Activated CD4-positive, alpha-beta T cell treated with anti-CD3 and anti-CD28 coated beads for 36 hours (primary cell): ENCODE measurements at regions of chr19 and their contacts with region 1.

Region 1: DNA sequence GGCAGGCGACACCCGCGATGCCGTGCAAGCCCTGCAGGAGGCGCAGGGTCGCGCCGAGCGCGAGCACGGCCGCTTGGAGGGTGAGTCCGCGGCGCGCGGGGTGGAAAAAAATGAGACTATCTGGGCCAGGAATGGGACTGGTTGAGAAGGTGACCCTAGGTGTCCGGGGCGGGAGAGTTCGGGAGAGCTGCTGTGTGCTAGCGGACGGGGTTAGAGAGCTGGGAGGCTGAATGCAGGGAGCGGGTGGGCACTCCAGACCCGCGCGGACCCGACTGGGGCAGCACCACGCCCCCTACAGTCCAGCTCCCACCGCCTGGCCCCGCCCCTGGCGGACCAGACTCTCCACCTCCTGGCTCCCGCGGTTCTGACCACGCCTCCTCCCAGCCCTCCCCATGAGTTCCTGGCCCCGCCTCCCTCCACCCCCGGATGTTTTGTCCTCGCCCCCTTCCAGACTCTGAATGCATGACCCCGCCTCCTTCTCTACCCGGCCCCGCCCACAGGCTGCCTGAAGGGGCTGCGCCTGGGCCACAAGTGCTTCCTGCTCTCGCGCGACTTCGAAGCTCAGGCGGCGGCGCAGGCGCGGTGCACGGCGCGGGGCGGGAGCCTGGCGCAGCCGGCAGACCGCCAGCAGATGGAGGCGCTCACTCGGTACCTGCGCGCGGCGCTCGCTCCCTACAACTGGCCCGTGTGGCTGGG is 1.5 kb downstream of the CLEC11A start:
- DNase-seq: peak; percentile 99
- ATAC-seq: peak; percentile 87
- H3K4me3 Mint-ChIP-seq: peak overlapping the region; percentile 80
- H3K27ac Mint-ChIP-seq: peak overlapping the region; percentile 63
- H3K4me1 Mint-ChIP-seq: peaks cover 26% of the 10 kb centered on the region
- H3K27me3 Mint-ChIP-seq: peaks cover 36% of the 10 kb centered on the region

Region 2: DNA sequence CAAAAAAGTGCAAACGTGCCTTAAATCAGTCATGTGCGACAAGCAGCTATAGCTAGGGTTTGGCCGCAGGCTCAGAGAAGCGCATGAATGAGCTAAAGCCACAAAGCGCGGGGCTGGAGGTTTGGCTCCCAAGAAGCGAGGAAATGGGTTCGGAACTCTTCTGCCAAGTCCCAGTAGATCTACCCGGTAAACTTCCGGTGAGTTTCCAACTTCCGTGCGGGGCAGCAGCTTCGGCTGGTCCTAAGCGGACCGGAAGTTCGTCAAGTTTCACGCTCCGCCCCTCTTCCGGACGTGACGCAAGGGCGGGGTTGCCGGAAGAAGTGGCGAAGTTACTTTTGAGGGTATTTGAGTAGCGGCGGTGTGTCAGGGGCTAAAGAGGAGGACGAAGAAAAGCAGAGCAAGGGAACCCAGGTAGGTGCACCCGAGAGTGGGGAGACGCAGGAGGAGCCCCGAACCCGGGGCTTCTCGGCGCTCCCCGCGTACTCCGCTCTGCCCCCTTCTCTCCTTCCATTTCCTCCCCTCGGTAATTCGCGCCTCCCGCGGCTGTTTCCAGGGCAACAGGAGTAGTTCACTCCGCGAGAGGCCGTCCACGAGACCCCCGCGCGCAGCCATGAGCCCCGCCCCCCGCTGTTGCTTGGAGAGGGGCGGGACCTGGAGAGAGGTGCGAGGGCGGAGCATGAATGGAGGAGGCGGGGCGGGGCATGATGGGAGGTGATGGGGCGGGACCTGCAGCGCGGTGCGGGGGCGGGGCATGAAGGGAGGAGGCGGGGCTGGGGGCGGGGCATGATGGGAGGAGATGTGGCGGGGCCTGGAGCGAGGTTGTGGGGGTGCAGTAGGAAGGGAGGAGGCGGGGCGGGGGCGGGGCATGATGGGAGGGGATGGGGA is 348.3 kb before region 1 on chr19 and contains the start of gene NR1H2:
- CTCF ChIA-PET with region 1: no interaction called
- POLR2A ChIA-PET with region 1: no interaction called
- intact Hi-C with region 1: loop called in 1 of 2 experiments (anchors 2 kb)
- DNase-seq: peak; percentile 97
- ATAC-seq: peak; percentile 89
- H3K4me3 Mint-ChIP-seq: peak within 1 kb of the TSS; percentile 89
- H3K27ac Mint-ChIP-seq: peak within 1 kb of the TSS; percentile 97
- H3K4me1 Mint-ChIP-seq: peaks cover 21% of the 10 kb centered on the region
- H3K27me3 Mint-ChIP-seq: no peaks in the 10 kb centered on the region
- total RNA-seq, gene NR1H2: 50.3 to 53.6 TPM

Region 3: GRCh38 chr19:50511068-50511822 is 213.4 kb before region 1 on chr19 and contains the start of gene JOSD2:
- CTCF ChIA-PET with region 1: interaction called, 6 read pairs
- POLR2A ChIA-PET with region 1: no interaction called
- intact Hi-C with region 1: loop called in 1 of 2 experiments (anchors 1 kb)
- DNase-seq: peak; percentile 99
- ATAC-seq: peak; percentile 97
- H3K4me3 Mint-ChIP-seq: peak within 1 kb of the TSS; percentile 84
- H3K27ac Mint-ChIP-seq: peak within 1 kb of the TSS; percentile 92
- H3K4me1 Mint-ChIP-seq: peaks cover 14% of the 10 kb centered on the region
- H3K27me3 Mint-ChIP-seq: peaks cover 5% of the 10 kb centered on the region
- total RNA-seq, gene JOSD2: 17.4 to 28.1 TPM

Region 4: GRCh38 chr19:50679177-50680125 is 45.2 kb before region 1 on chr19:
- CTCF ChIA-PET with region 1: interaction called, 5 read pairs
- POLR2A ChIA-PET with region 1: no interaction called
- intact Hi-C with region 1: loop called in 1 of 2 experiments (anchors 1 kb)
- DNase-seq: peak; percentile 91
- ATAC-seq: peak; percentile 98
- H3K4me3 Mint-ChIP-seq: no peak overlapping the region
- H3K27ac Mint-ChIP-seq: no peak overlapping the region
- H3K4me1 Mint-ChIP-seq: peaks cover 8% of the 10 kb centered on the region
- H3K27me3 Mint-ChIP-seq: peaks cover 36% of the 10 kb centered on the region

Region 5: DNA sequence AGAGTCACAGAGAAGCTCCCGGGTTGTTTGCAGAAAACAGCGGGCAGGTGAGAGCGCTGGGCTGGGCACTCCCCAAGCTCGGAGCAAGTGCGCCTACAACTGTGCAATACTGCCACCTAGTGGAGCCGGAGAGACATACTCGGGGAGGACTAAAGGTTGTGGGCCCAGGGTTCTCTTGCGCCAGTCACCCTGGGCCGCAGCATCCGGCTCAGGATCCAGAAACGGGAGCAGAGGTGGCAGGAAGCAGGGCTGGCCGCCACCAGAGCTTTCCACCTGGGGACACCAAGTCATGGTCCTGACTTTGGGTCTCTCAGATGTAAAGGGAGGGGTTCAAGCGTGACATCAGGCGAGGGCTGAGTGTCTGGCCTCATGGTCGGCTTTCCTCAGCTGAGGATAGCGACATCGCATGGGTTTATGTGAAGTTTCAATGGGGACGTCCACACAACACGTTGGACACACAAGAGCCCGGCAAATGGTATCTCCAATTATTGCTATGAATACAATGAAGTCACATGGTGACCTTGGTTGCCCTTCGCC is 197.7 kb after region 1 on chr19:
- CTCF ChIA-PET with region 1: interaction called, 10 read pairs
- POLR2A ChIA-PET with region 1: no interaction called
- intact Hi-C with region 1: loop called in 1 of 2 experiments (anchors 1 kb)
- DNase-seq: peak; percentile 90
- ATAC-seq: peak; percentile 100
- H3K4me3 Mint-ChIP-seq: no peak overlapping the region
- H3K27ac Mint-ChIP-seq: no peak overlapping the region
- H3K4me1 Mint-ChIP-seq: peaks cover 7% of the 10 kb centered on the region
- H3K27me3 Mint-ChIP-seq: peaks cover 34% of the 10 kb centered on the region